HepG2 (cell line): ENCODE measurements at regions of chr14 and their contacts with region 1.

Region 1: GRCh38 chr14:24817212-24818057 is 183.4 kb upstream of the GZMB start:
- DNase-seq: peak; percentile 98
- ATAC-seq: peak; percentile 57
- H3K4me3 ChIP-seq: peak overlapping the region; percentile 18 to 56 (median 35)
- H3K27ac ChIP-seq: peak overlapping the region; percentile 86
- H3K4me1 ChIP-seq: peaks cover 76% of the 10 kb centered on the region
- H3K27me3 ChIP-seq: no peaks in the 10 kb centered on the region
- CTCF ChIP-seq: peak; percentile 81
- EP300 ChIP-seq: peak in 1 of 2 experiments; percentile 88; a peak in 2 of 4 replicates
- POLR2A ChIP-seq: no peak
- RAD21 ChIP-seq: 0 out of 2 replicates have a peak, but pooled peaks have one; percentile 9

Region 2: GRCh38 chr14:24828486-24828885 is 11.1 kb after region 1 on chr14:
- CTCF ChIA-PET with region 1: no interaction called
- POLR2A ChIA-PET with region 1: interaction called, 25 read pairs
- in situ Hi-C with region 1: no loop called
- intact Hi-C with region 1: no loop called
- DNase-seq: no peak
- ATAC-seq: no peak
- H3K4me3 ChIP-seq: no peak overlapping the region
- H3K27ac ChIP-seq: no peak overlapping the region
- H3K4me1 ChIP-seq: peaks cover 10% of the 10 kb centered on the region
- H3K27me3 ChIP-seq: no peaks in the 10 kb centered on the region
- CTCF ChIP-seq: no peak
- EP300 ChIP-seq: no peak
- POLR2A ChIP-seq: no peak
- RAD21 ChIP-seq: no peak

Region 3: GRCh38 chr14:24887623-24888293 is 70.3 kb after region 1 on chr14:
- CTCF ChIA-PET with region 1: no interaction called
- POLR2A ChIA-PET with region 1: interaction called, 9 read pairs
- in situ Hi-C with region 1: no loop called
- intact Hi-C with region 1: loop called (anchors 2 kb)
- DNase-seq: no peak
- ATAC-seq: no peak
- H3K4me3 ChIP-seq: no peak overlapping the region
- H3K27ac ChIP-seq: no peak overlapping the region
- H3K4me1 ChIP-seq: peaks cover 49% of the 10 kb centered on the region
- H3K27me3 ChIP-seq: no peaks in the 10 kb centered on the region
- CTCF ChIP-seq: no peak
- EP300 ChIP-seq: no peak; a peak in 1 of 4 replicates
- POLR2A ChIP-seq: no peak
- RAD21 ChIP-seq: no peak

Region 4: DNA sequence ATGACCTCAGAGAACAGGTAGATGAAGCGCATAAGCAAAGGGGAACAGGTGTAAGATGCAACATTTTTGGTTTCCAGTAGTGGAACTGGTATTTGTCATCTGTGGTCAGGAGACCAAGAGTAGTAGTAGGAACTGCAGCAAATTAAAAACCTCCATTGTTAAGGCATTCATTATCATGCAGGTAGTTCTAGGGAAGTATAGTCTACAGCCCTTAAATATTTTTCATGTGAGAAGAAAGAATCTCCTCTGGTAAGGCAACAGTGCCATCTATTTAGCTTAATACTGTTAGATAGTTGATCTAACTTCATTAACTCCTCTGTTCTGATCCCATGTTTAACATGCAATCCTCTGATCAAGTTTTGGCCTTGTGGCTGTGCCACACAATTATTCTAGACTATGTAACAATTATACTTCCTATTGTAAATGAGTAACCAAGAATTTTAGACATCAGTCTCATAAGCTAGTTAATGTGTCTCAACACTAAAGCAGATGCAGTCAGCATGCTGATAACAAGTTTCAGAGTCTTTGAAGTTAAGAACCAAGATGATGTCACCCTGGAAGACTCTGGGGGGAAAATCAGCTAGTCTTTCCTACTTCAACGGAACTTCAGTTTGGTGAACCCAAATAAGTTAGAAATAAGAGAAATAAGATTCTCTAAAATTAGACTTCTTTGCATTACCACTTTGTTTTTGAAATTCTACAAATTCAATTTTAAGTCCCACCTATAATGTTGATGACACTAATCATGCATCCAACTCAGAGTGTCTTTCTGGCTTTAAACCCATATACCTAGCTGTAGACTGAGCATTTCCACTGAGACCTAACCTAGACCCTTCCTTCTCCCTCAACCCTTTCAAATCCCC is 161.7 kb after region 1 on chr14:
- CTCF ChIA-PET with region 1: no interaction called
- POLR2A ChIA-PET with region 1: interaction called, 25 read pairs
- in situ Hi-C with region 1: no loop called
- intact Hi-C with region 1: no loop called
- DNase-seq: peak; percentile 93
- ATAC-seq: peak; percentile 89
- H3K4me3 ChIP-seq: no peak overlapping the region
- H3K27ac ChIP-seq: peak overlapping the region; percentile 31
- H3K4me1 ChIP-seq: peaks cover 58% of the 10 kb centered on the region
- H3K27me3 ChIP-seq: no peaks in the 10 kb centered on the region
- CTCF ChIP-seq: peak; percentile 19; the same call in 1 of the 2 replicates
- EP300 ChIP-seq: peak in 1 of 2 experiments; percentile 86; a peak in 2 of 4 replicates
- POLR2A ChIP-seq: no peak
- RAD21 ChIP-seq: no peak